Psoas muscle (tissue), 8 donors: ENCODE measurements at regions of chr11 and their contacts with region 1.

Region 1: DNA sequence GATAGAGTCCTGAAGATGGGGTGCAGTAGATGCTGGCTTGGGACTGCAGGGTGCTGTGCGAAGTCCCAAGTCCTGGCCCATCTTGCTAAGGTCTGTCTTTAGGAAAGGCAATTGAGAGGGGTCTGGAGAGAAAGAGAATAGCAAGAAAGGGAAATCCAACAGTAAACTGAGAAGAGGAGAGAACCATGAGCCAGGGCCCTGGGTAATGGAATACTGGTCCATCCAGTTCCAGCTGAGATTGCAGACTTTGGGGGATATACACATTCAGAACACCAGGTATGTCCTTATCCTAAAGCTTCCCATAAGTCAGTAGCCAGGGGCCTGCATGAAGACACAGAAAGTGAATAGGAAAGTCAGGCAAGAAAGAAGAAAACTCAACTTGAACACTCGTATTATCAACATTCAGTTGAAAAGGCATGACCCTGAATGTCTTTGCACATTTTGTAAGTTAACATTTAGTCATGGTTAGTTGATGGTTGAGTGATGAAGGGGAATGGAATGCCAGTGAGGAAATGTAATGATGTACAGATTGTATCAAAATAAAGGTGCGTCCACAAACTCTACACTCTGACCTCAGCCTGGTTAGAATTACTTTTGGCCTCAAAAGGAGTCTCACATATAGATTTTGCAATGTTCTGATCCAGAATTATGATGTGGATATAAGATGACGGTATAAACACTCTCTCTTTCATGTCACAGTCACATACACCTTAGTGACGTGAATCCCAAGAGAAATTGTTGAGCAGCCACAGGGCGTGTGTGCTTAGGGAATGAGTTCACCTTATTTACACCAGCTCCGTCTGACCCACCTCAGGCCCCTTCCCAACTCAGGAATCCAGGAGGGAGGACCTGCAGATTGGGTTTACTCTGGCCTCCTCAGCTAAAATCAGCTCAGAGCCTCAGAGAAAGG is 100.3 kb downstream of the RDX start:
- DNase-seq: no peak
- ATAC-seq: no peak
- H3K4me3 ChIP-seq: no peak overlapping the region
- H3K27ac ChIP-seq: no peak overlapping the region
- H3K4me1 ChIP-seq: no peaks in the 10 kb centered on the region
- H3K27me3 ChIP-seq: no peaks in the 10 kb centered on the region
- CTCF ChIP-seq: no peak

Region 2: DNA sequence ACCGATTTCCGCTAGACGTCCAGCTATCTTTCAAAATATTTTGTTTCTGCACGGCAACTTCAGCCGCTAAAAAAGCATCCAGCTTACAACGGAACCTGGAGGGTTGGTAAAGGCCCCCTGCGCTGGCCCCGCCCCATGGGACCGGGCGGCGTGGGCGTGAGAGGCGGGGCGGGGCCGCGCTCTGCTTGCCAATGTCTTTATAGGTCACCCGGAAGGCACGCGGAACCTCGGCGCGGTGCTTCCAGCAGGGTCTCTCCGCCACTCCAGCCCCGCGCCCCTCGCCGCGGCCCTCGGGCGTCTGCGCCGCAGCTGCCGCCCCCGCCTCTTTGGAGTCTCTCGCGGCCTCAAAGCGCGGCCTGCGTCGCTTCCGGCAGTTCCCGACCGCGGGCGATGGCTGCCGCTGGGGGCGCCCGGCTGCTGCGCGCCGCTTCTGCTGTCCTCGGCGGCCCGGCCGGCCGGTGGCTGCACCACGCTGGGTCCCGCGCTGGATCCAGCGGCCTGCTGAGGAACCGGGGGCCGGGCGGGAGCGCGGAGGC is 233.7 kb after region 1 on chr11 and contains the start of gene FDX1:
- intact Hi-C with region 1: loop called (anchors 2 to 5 kb)
- DNase-seq: peak; percentile 84 to 89
- ATAC-seq: peak; percentile 93 to 94 (median 94)
- H3K4me3 ChIP-seq: peak within 1 kb of the TSS; percentile 87
- H3K27ac ChIP-seq: peak within 1 kb of the TSS; percentile 92
- H3K4me1 ChIP-seq: peaks cover 33% of the 10 kb centered on the region
- H3K27me3 ChIP-seq: no peaks in the 10 kb centered on the region
- CTCF ChIP-seq: peak; percentile 66
- total RNA-seq, gene FDX1: 14.0 to 23.7 (median 15.6) TPM